ENCODE measurements at regions of chr20 and their contacts with region 1.

Region 1: GRCh38 chr20:45373353-45374100 is 4.6 kb downstream of the TP53TG5 start:
- DNase-seq: peak; percentile 91 to 94 (median 92)
- ATAC-seq: peak; percentile 85 to 92 (median 88)
- H3K4me3 ChIP-seq: peak overlapping the region; percentile 23 to 73 (median 62)
- H3K27ac ChIP-seq: peak overlapping the region in 11 of 12 donors; percentile 48 to 82 (median 73)
- H3K4me1 ChIP-seq: peaks cover 0 to 27% (median 11%) of the 10 kb centered on the region in 12 donors
- H3K27me3 ChIP-seq: no peaks in the 10 kb centered on the region
- CTCF ChIP-seq: peak; percentile 81 to 96 (median 90)
- POLR2A ChIP-seq: no peak

Region 2: GRCh38 chr20:45322952-45323383 is 50.6 kb before region 1 on chr20:
- intact Hi-C with region 1: loop called in 6 of 10 experiments (anchors 5 kb)
- DNase-seq: peak in 4 of 5 donors; percentile 63 to 80 (median 74)
- ATAC-seq: peak; percentile 77 to 82 (median 80)
- H3K4me3 ChIP-seq: no peak overlapping the region
- H3K27ac ChIP-seq: peak overlapping the region in 2 of 12 donors; percentile 41 to 42
- H3K4me1 ChIP-seq: peaks cover 0 to 22% (median 0%) of the 10 kb centered on the region in 12 donors
- H3K27me3 ChIP-seq: peaks cover 0 to 2% (median 0%) of the 10 kb centered on the region in 9 donors
- CTCF ChIP-seq: peak; percentile 17 to 63 (median 46)
- POLR2A ChIP-seq: no peak

Region 3: GRCh38 chr20:45329510-45330319 is 43.8 kb before region 1 on chr20:
- intact Hi-C with region 1: loop called in 6 of 10 experiments (anchors 5 kb)
- DNase-seq: no peak
- ATAC-seq: no peak
- H3K4me3 ChIP-seq: no peak overlapping the region
- H3K27ac ChIP-seq: peak overlapping the region in 1 of 12 donors; percentile 19
- H3K4me1 ChIP-seq: peaks cover 0 to 5% (median 0%) of the 10 kb centered on the region in 12 donors
- H3K27me3 ChIP-seq: no peaks in the 10 kb centered on the region
- CTCF ChIP-seq: no peak
- POLR2A ChIP-seq: no peak

Region 4: GRCh38 chr20:45406259-45407066 is 32.9 kb after region 1 on chr20:
- intact Hi-C with region 1: loop called in 6 of 10 experiments (anchors 1 to 5 kb)
- DNase-seq: peak; percentile 90 to 92 (median 91)
- ATAC-seq: peak; percentile 5 to 67 (median 49)
- H3K4me3 ChIP-seq: peak overlapping the region; percentile 69 to 98 (median 84)
- H3K27ac ChIP-seq: peak overlapping the region; percentile 96 to 100 (median 99)
- H3K4me1 ChIP-seq: peaks cover 0 to 52% (median 30%) of the 10 kb centered on the region in 12 donors
- H3K27me3 ChIP-seq: peaks cover 0 to 5% (median 0%) of the 10 kb centered on the region in 9 donors
- CTCF ChIP-seq: peak in 3 of 12 donors; percentile 24 to 50 (median 44)
- POLR2A ChIP-seq: peak in 1 of 2 donors; percentile 69

Region 5: GRCh38 chr20:45415774-45416637 is 42.5 kb after region 1 on chr20 and contains the start of gene PIGT:
- intact Hi-C with region 1: loop called in 1 of 10 experiments (anchors 5 kb)
- DNase-seq: peak; percentile 87 to 92 (median 88)
- ATAC-seq: peak; percentile 65 to 84 (median 77)
- H3K4me3 ChIP-seq: peak within 1 kb of the TSS; percentile 52 to 97 (median 82)
- H3K27ac ChIP-seq: peak within 1 kb of the TSS; percentile 55 to 90 (median 83)
- H3K4me1 ChIP-seq: peaks cover 0 to 62% (median 42%) of the 10 kb centered on the region in 12 donors
- H3K27me3 ChIP-seq: no peaks in the 10 kb centered on the region
- CTCF ChIP-seq: no peak
- POLR2A ChIP-seq: peak; percentile 52 to 92
- total RNA-seq, gene PIGT: 124 to 224 (median 165) TPM

Region 6: DNA sequence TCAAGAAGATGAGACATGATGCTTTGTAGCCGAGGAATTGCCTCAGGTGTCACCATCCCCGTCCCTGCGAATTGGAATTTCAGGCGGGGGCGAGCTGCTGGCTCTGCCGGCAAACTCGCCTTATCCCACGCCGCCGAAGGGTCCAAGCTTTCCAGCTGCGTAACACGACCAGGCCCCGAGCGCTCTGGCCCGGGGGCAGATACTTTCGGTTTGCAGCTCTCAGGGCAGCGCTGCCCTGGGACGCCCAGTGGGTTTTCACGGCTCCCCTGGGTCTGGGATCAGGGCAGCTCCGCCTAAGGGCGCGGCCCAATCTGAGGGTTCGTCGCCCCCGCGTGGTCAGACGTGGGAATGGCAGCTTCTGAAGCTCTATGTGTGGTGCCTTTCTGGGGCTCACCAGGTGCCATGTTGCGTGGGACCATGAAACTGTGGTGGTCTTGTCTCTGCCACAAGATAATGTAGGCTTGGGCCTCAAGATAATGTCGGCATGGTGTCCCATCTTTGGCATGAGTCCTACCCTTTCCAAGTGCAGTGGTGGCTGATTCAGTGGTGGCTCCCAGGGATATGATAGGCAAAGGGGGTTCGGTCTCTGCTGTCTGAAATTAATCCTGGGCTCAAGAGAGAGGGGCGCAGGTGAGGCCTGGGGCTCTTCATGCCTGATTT is 63.3 kb after region 1 on chr20:
- intact Hi-C with region 1: loop called (anchors 1 to 5 kb)
- DNase-seq: peak; percentile 88 to 94 (median 90)
- ATAC-seq: peak; percentile 95 to 97 (median 96)
- H3K4me3 ChIP-seq: peak overlapping the region; percentile 39 to 77 (median 62)
- H3K27ac ChIP-seq: peak overlapping the region in 11 of 12 donors; percentile 65 to 85 (median 73)
- H3K4me1 ChIP-seq: peaks cover 0 to 15% (median 7%) of the 10 kb centered on the region in 12 donors
- H3K27me3 ChIP-seq: no peaks in the 10 kb centered on the region
- CTCF ChIP-seq: peak; percentile 93 to 100 (median 96)
- POLR2A ChIP-seq: peak in 1 of 2 donors; percentile 36

Measured in heart left ventricle (tissue), 16 donors.